ENCODE measurements at regions of chr2 and their contacts with region 1.

Region 1: GRCh38 chr2:191486584-191487320 is 191.2 kb upstream of the NABP1 start:
- DNase-seq: no peak
- H3K4me3 ChIP-seq: no peak overlapping the region
- H3K27ac ChIP-seq: no peak overlapping the region
- H3K4me1 ChIP-seq: no peaks in the 10 kb centered on the region
- H3K27me3 ChIP-seq: no peaks in the 10 kb centered on the region

Region 2: DNA sequence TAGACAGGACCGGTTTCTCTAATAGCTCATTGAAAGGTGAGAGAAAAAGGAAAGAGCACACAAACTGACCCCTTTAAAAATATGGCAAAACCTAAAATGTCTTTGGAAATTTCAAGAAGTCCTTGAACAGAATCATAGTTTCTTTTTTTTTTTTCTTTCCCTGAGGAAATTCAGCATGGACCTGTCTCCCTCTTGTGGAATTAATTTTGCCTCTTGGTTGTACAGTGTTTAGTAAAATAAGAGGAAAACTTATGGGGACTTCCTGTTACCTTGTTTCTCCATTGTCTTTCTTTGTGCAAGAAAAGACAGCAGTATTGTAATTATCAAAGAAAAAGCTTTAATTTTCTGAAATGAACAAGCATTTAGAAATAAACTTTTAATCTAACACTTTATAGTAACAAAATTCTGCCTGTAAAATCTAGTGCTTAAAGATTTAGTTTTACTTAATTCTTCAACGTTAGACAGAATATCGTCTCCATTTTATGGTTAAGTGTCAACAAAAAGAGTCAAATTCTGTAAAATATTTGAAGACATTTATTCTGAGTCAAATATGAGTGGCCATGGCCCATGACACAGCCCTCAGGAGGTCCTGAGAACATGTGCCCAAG is 14.9 kb after region 1 on chr2:
- CTCF ChIA-PET with region 1: interaction called, 11 read pairs
- POLR2A ChIA-PET with region 1: no interaction called
- DNase-seq: peak; percentile 18 to 28 (median 20)
- H3K4me3 ChIP-seq: no peak overlapping the region
- H3K27ac ChIP-seq: no peak overlapping the region
- H3K4me1 ChIP-seq: no peaks in the 10 kb centered on the region
- H3K27me3 ChIP-seq: no peaks in the 10 kb centered on the region